HEK293 (cell line): ENCODE measurements at regions of chr4 and their contacts with region 1.

Region 1: DNA sequence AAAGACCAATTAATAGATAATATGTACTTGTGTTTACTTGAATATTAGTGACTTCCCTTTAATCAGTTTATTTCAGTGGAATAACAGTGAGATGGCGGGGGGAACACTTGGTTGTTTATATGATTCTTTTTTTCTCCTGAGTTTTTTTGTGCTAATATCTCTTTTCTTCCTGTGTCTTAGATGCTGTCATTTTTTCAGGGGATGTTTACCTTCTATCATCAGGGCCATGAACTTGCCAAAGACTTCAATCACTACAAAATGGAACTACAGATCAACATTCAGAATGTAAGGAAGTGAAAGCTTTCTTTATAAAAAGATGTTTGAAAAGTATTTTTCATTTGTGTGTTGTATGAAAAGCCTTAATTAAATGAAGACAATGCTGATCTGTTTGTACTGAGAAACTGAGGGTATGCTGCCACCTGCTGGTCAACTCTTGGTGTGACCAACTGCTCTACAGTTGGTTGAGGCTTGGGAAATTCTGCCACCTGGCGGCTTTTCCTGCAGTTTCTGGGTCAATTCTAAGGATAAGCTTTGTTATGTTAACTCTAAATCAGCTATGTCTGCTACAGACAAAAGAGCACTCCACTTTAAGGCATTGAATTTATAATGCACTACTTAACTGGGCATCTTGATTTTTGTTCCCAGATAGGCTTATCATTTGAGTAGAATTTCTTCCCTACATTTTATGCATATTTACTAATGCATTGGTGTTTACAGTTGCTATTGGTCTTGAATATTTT is 134.8 kb downstream of the ARHGAP10 start:
- H3K4me3 ChIP-seq: no peak overlapping the region
- H3K27ac ChIP-seq: no peak overlapping the region
- H3K4me1 ChIP-seq: no peaks in the 10 kb centered on the region
- CTCF ChIP-seq: peak; percentile 76

Region 2: DNA sequence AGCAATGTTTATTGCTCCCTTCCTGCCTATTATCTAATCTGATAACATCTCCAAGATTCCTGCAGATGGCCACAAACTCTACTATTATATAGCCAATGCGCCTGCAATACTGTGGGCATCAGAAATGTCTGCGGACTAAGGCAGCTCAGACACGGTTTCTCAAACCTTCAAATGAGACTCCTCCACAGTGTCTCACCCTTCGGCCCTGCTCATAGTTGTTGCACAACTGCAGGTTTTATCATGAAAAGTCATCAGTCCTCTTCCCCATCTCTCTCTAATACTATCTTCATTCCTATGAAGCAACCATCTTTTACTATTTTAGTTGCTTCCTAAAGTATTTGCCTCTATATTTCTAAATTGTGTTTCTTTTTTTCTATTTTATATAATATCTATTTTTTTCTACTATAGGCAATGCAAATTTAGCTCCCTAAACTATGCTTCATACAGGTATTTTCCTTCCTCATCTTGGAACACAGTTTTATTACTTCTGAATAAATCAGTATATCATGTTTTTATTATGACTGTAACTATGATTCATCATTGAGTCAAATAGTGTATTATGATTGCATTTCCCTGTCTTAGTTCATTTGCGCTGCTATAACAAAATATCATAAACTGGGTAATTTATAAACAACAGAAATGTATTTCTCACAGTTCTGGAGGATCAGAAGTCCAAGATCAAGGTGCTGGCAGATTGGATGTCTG is 515.5 kb before region 1 on chr4:
- CTCF ChIA-PET with region 1: no interaction called
- POLR2A ChIA-PET with region 1: no interaction called
- H3K4me3 ChIP-seq: no peak overlapping the region
- H3K27ac ChIP-seq: no peak overlapping the region
- H3K4me1 ChIP-seq: no peaks in the 10 kb centered on the region
- CTCF ChIP-seq: no peak

Region 3: GRCh38 chr4:147596981-147597380 is 269.7 kb before region 1 on chr4:
- CTCF ChIA-PET with region 1: interaction called, 23 read pairs
- POLR2A ChIA-PET with region 1: interaction called, 3 read pairs
- H3K4me3 ChIP-seq: no peak overlapping the region
- H3K27ac ChIP-seq: no peak overlapping the region
- H3K4me1 ChIP-seq: no peaks in the 10 kb centered on the region
- CTCF ChIP-seq: no peak

Region 4: DNA sequence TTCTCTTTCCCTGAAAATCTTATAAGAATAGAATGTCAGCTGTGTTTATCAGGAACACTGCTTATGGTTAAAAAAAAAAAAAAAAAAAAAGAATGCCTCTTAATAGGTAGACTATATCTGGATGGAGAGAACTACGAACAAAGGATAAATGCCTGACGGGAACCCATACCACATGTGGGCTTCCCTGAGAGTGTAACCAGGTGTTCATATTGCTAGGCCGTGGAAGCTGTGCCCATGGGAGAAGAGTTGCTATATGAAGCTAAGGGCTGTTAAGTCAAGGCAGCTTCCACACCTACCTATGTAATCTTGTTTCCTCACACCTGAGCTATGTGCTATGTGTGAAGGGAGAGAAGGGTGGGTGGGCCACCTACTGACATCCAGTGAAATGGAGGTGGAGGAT is 222.2 kb before region 1 on chr4:
- CTCF ChIA-PET with region 1: interaction called, 15 read pairs
- POLR2A ChIA-PET with region 1: no interaction called
- H3K4me3 ChIP-seq: no peak overlapping the region
- H3K27ac ChIP-seq: no peak overlapping the region
- H3K4me1 ChIP-seq: no peaks in the 10 kb centered on the region
- CTCF ChIP-seq: no peak

Region 5: GRCh38 chr4:147731580-147732517 is 134.9 kb before region 1 on chr4 and contains the start of gene ARHGAP10:
- CTCF ChIA-PET with region 1: interaction called, 11 read pairs
- POLR2A ChIA-PET with region 1: no interaction called
- H3K4me3 ChIP-seq: peak within 1 kb of the TSS; percentile 58
- H3K27ac ChIP-seq: peak within 1 kb of the TSS; percentile 97
- H3K4me1 ChIP-seq: peaks cover 16% of the 10 kb centered on the region
- CTCF ChIP-seq: peak; percentile 62

Region 6: DNA sequence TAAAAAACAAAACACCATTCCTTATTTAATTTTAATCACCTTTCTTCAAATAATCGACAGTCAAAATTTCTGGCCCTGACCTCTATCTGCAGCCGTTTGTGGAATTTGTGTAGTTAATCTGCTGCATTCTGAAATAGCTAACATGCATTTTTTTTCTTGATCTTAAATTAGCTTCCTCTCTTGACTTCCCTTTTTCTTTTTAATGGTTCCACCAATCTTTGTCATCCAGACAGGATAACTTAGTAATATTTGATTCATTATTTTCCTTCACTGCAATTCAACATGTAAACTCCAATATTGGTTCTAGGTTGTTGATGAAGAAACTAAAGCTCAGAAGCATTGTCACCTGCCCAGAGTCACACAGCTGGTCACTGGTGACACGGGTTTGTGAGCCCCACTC is 57.5 kb before region 1 on chr4:
- CTCF ChIA-PET with region 1: interaction called, 12 read pairs
- POLR2A ChIA-PET with region 1: no interaction called
- H3K4me3 ChIP-seq: no peak overlapping the region
- H3K27ac ChIP-seq: no peak overlapping the region
- H3K4me1 ChIP-seq: peaks cover 12% of the 10 kb centered on the region
- CTCF ChIP-seq: no peak

Region 7: DNA sequence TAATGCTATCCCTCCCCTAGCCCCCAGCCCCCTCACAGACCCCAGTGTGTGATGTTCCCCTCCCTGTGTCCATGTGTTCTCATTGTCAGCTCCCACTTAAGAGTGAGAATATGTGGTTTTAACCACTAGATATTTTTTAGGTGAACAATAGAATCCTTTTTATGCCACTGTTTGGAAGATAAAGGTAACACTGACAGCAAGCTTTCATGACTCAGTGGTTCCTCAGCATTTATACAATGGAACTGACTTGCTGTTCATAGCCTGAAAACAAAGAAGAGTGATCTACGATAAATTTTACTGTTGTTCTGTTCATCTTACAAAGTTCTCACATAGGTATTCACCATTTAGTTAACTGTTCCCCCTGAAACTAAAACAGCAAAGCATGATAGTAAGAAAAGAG is 13.0 kb after region 1 on chr4:
- CTCF ChIA-PET with region 1: interaction called, 14 read pairs
- POLR2A ChIA-PET with region 1: no interaction called
- H3K4me3 ChIP-seq: no peak overlapping the region
- H3K27ac ChIP-seq: no peak overlapping the region
- H3K4me1 ChIP-seq: no peaks in the 10 kb centered on the region
- CTCF ChIP-seq: no peak